ACHN (cell line): ENCODE measurements at regions of chr7 and their contacts with region 1.

Region 1: GRCh38 chr7:98034081-98035035 is 44.4 kb upstream of the OCM2 start:
- DNase-seq: no peak

Region 2: GRCh38 chr7:98168181-98168905 is 134.0 kb after region 1 on chr7:
- in situ Hi-C with region 1: loop called (anchors 10 kb)
- DNase-seq: peak; percentile 77